ENCODE measurements at regions of chr14 and their contacts with region 1.

Region 1: DNA sequence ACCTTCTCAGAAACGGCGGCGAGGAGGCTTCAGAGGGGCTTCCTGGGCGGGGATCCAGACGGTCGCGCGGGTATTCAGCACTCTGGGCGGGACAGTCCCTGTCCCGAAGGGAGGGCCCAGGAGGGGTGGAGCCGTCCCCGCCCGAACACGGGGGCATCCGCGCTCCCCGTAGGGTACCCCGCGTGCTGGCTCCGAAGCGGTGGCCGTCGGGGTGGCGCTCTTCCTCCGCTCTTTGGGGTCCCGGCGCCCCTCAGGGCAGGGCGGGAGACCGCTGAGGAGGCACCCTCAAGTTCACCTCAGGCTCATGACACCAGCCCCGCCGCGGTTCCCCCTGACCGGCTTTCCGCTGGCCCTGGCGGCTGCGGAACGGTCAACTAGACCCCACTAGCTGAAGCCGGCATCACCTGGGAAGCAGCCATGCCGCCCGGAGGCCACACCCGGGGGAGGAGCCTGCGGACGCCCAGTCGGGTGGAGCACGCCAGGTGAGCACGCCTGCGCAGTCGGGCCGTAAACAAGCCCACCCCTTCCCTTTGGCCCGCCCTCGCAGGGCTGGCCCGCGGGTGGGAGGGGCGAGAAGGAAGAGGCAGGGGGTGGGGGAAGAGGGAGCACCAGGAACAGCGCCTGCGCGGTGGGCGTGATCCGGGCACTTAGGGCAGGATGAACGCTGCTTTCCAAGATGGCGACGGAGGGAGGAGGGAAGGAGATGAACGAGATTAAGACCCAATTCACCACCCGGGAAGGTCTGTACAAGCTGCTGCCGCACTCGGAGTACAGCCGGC is at the start of gene WDR20:
- DNase-seq: peak; percentile 99
- H3K4me3 ChIP-seq: peak within 1 kb of the TSS; percentile 93
- H3K27ac ChIP-seq: peak within 1 kb of the TSS; percentile 56
- H3K4me1 ChIP-seq: peaks cover 19% of the 10 kb centered on the region
- CTCF ChIP-seq: peak; percentile 57
- total RNA-seq, gene WDR20: 13.3 and 18.0 TPM in 2 replicates

Region 2: DNA sequence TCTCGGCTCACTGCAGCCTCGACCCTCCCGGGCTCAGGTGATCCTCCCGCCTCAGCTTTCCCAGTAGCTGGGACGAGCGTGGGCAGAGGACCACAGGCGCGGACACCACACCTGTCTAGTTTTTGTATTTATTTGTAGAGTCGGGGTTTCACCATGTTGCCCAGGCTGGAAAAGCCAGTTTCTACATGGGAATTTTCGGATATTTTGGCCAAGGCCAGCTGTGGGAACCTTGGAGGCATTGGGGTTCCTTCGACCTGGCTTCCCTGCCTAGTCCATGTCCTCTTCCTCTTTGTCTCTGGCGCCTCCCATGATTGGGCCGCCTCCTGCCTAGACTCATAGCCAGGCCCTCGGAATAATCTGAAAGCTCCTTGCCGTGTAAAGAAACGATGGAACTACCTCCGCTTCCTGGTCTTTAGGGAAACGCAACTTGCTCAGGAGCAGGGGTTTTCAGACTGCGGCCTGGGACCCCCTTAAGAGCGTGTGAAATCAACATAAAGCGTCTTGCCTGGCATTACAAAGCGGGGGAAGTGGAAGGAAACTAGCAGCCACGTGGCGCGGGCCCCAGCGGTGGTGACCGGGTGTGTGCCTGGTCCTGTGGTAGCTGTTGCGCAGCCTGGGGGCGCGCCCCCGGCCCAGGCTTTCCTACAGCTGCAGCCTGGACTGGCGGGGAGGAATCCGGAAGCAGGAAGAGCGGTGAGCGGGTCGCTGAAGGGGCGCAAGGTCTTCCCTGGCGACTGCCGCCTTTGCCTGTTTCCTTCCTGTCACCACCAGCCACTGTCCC is 51.2 kb before region 1 on chr14:
- CTCF ChIA-PET with region 1: no interaction called
- POLR2A ChIA-PET with region 1: no interaction called
- intact Hi-C with region 1: loop called (anchors 1 kb)
- DNase-seq: peak; percentile 65
- H3K4me3 ChIP-seq: peak overlapping the region; percentile 93
- H3K27ac ChIP-seq: peak overlapping the region; percentile 66
- H3K4me1 ChIP-seq: peaks cover 42% of the 10 kb centered on the region
- CTCF ChIP-seq: no peak